ENCODE measurements at regions of chr22 and their contacts with region 1.

Region 1: GRCh38 chr22:20437613-20438426 is at the start of gene SCARF2:
- DNase-seq: peak; percentile 84
- H3K4me3 ChIP-seq: peak within 1 kb of the TSS; percentile 55 to 61 (median 58)
- H3K27ac ChIP-seq: peak within 1 kb of the TSS; percentile 73 to 91 (median 82)
- H3K4me1 ChIP-seq: peaks cover 0 to 41% (median 35%) of the 10 kb centered on the region in 4 donors
- H3K27me3 ChIP-seq: peaks cover 0 to 21% (median 0%) of the 10 kb centered on the region in 3 donors
- CTCF ChIP-seq: no peak
- EP300 ChIP-seq: no peak
- POLR2A ChIP-seq: no peak
- total RNA-seq, gene SCARF2: 6.4 to 12.8 (median 10.4) TPM

Region 2: DNA sequence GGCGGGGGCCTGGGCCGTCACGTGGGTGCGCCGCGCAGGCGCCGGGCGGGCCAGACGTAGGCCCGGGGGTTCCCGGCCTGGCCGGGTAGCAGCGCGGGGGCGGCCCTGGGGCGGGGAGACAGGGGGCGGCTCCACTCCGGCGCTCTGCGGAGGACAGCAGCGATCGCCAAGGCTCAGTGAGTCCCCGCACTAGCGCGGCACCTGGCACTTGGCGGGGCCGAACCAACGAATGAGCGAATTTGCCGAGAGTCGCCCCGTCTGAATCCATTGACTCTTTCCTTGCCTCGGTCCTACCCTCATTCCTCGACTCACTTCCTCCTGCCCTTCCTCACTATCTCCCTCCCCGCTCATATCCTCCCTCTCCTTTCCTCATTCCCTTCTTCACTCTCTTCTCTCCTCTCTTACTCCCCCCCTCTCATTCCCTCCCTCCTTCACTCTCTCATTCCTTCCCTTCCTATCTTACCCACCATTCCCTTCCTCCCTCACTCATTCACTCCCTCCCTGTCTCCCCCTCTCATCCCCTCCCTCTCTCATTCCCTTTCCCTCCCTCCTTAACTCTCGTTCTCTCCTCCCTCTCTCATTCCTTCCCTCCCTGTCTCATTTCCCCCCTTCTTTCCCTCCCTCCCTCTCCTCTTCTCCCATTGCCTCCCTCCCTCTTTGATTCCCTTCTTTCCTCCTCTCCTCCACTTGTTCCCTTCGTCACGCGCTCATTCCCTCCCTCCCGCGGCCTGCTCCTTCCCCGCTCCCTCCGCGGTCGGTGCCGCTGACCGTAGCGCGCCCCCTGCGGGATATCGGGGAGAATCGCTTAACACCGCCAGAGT is 58.3 kb after region 1 on chr22:
- intact Hi-C with region 1: loop called (anchors 5 kb)
- DNase-seq: peak; percentile 96
- H3K4me3 ChIP-seq: peak overlapping the region; percentile 42 to 85 (median 72)
- H3K27ac ChIP-seq: peak overlapping the region; percentile 91 to 97 (median 94)
- H3K4me1 ChIP-seq: peaks cover 0 to 38% (median 26%) of the 10 kb centered on the region in 4 donors
- H3K27me3 ChIP-seq: no peaks in the 10 kb centered on the region
- CTCF ChIP-seq: peak; percentile 83 to 97 (median 92)
- EP300 ChIP-seq: no peak
- POLR2A ChIP-seq: peak; percentile 70 to 80